K562 (cell line): ENCODE measurements at regions of chr20 and their contacts with region 1.

Region 1: DNA sequence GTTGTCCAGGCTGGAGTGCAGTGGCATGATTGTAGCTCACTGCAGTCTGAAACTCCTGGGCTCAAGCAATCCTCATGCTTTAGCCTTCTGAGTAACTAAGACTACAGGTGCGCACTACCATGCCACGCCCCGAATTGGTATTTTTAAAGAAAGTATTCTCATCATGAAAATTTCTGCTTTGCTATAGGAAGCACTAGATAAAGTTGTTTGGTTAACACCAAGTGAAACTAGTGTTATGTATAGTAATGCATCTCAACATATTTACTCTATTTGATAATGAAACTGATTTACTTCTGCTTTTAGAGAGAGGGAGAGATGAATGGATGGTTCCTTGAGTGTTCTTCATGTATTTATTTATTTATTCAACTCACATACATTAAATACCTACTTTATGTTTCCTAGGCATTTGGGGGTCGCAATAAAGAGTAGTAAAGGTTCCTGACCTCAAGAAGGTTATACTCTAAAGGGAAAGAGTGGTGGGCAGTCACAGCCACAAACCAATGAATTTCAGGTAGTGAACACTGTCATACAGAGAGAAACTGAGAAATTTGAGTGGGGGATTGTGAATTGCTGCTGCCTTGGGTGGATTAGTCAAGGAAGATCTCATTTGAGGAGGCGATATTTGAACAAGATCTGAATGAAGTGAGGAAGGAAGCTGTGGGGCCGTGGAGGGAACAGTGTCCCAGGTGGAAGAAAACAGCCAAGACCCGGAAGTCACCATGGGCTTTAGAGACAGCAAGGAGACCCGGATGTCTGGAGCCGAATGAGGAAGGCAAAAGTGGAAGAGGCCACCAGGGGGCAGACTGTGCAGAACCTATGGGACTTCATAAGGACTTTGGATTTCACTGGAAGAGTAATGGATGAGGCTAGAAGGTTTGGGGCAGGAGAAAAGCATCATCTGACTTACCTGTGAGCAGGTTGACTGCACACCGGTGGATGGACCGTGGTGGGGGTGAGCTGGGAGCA is 185.6 kb downstream of the TSHZ2 start:
- DNase-seq: peak; percentile 55 to 79 (median 59)
- ATAC-seq: peak; percentile 56
- H3K4me3 ChIP-seq: no peak overlapping the region
- H3K27ac ChIP-seq: no peak overlapping the region
- H3K4me1 ChIP-seq: peaks cover 14 to 20% of the 10 kb centered on the region in 2 experiments
- H3K27me3 ChIP-seq: no peaks in the 10 kb centered on the region
- CTCF ChIP-seq: peak; percentile 61 to 69 (median 66)
- EP300 ChIP-seq: no peak
- POLR2A ChIP-seq: no peak
- RAD21 ChIP-seq: peak in 1 of 2 experiments; percentile 68; a peak in 3 of 4 replicates

Region 2: DNA sequence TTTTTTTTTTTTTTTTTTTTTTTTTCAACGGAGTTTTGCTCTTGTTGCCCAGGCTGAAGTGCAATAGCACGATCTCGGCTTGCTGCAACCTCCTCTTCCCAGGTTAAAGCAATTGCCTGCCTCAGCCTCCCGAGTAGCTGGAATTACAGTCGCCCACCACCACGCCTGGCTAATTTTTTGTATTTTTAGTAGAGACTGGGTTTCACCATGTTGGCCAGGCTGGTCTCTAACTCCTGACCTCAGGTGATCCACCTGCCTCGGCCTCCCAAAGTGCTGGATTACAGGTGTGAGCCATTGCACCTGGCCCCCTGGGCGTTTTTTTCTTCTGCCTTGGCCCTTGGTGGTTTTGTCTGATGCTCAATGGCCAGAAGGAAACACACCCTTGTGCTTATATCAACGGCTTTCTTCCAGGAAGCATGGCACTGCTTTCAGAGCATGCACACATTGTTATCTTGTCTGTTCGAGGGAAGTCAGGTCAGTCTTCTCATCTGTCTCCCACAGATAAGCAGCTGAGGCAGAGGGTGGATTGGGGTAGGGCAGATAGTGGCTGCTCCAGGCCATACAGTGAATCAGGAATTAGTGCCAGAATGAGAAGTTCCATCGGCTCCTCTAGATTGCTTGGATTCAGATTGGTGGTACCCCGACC is 17.5 kb after region 1 on chr20:
- CTCF ChIA-PET with region 1: no interaction called
- POLR2A ChIA-PET with region 1: interaction called, 4 read pairs
- in situ Hi-C with region 1: no loop called
- intact Hi-C with region 1: loop called (anchors 1 kb)
- DNase-seq: peak; percentile 92 to 95 (median 94)
- ATAC-seq: peak; percentile 94
- H3K4me3 ChIP-seq: no peak overlapping the region
- H3K27ac ChIP-seq: peak overlapping the region; percentile 17; the same call in 2 of the 3 replicates
- H3K4me1 ChIP-seq: peaks cover 20 to 35% of the 10 kb centered on the region in 2 experiments; a peak in 4 of 5 replicates
- H3K27me3 ChIP-seq: no peaks in the 10 kb centered on the region
- CTCF ChIP-seq: no peak
- EP300 ChIP-seq: peak; percentile 99
- POLR2A ChIP-seq: no peak
- RAD21 ChIP-seq: peak in 1 of 2 experiments; percentile 50; a peak in 3 of 4 replicates

Region 3: GRCh38 chr20:53195876-53196610 is 38.3 kb after region 1 on chr20:
- CTCF ChIA-PET with region 1: no interaction called
- POLR2A ChIA-PET with region 1: no interaction called
- in situ Hi-C with region 1: no loop called
- intact Hi-C with region 1: loop called (anchors 2 kb)
- DNase-seq: peak in 2 of 4 experiments; percentile 44 to 49
- ATAC-seq: peak; percentile 38; the same call in 1 of the 3 replicates
- H3K4me3 ChIP-seq: no peak overlapping the region
- H3K27ac ChIP-seq: no peak overlapping the region
- H3K4me1 ChIP-seq: peaks cover 0 to 6% of the 10 kb centered on the region in 2 experiments; a peak in 1 of 5 replicates
- H3K27me3 ChIP-seq: peaks cover 13 to 19% of the 10 kb centered on the region in 2 experiments; a peak in 4 of 5 replicates
- CTCF ChIP-seq: peak; percentile 27 to 63 (median 29); a peak in 3 of 6 replicates
- EP300 ChIP-seq: no peak
- POLR2A ChIP-seq: no peak
- RAD21 ChIP-seq: peak in 1 of 2 experiments; percentile 52; a peak in 3 of 4 replicates

Region 4: DNA sequence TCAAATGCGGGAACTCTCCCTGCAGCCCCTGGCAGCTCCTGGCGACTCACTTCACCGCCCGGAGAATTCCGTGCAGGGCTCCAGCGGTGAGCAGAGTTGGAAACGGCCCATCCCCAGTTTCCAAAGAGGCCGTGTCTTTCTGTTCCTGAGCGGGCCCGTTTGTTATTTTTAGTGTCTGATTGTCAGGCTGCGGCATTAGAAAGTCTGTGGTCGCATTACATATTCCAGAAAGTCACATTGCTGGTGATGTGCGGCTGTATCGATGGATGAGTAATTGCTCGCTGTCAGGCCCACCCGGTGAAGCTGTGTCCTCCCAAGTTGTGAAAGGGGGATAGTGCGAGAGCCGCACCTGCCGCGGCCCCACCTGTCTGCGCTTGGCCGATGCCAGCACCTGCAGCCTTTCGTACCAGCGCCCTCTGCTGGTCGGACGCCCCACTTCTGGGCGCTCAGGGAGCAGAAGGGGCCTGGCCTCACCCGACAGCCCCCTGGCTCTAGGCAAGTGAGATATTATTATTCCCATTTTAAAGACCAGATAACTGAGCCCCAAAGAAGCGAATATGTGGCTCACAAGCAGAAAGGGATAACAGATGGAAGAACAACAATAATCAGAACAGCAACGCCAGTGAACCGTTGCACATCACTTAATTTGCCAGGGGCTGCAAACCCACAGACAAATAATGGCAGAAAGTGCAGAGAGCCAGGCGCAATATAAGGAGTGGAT is 59.3 kb after region 1 on chr20:
- CTCF ChIA-PET with region 1: no interaction called
- POLR2A ChIA-PET with region 1: no interaction called
- in situ Hi-C with region 1: no loop called
- intact Hi-C with region 1: loop called (anchors 1 kb)
- DNase-seq: peak; percentile 72 to 83 (median 78)
- ATAC-seq: peak; percentile 99
- H3K4me3 ChIP-seq: no peak overlapping the region
- H3K27ac ChIP-seq: no peak overlapping the region
- H3K4me1 ChIP-seq: peaks cover under 1 to 5% of the 10 kb centered on the region in 2 experiments; a peak in 4 of 5 replicates
- H3K27me3 ChIP-seq: peaks cover 0 to 2% of the 10 kb centered on the region in 2 experiments; a peak in 2 of 5 replicates
- CTCF ChIP-seq: peak; percentile 81 to 91 (median 88)
- EP300 ChIP-seq: no peak
- POLR2A ChIP-seq: no peak
- RAD21 ChIP-seq: peak; percentile 80 to 89

Region 5: GRCh38 chr20:53238121-53238660 is 80.5 kb after region 1 on chr20:
- CTCF ChIA-PET with region 1: no interaction called
- POLR2A ChIA-PET with region 1: no interaction called
- in situ Hi-C with region 1: no loop called
- intact Hi-C with region 1: no loop called
- DNase-seq: no peak
- ATAC-seq: no peak
- H3K4me3 ChIP-seq: no peak overlapping the region
- H3K27ac ChIP-seq: no peak overlapping the region
- H3K4me1 ChIP-seq: no peaks in the 10 kb centered on the region
- H3K27me3 ChIP-seq: peaks cover 0 to under 1% of the 10 kb centered on the region in 2 experiments; a peak in 1 of 5 replicates
- CTCF ChIP-seq: no peak
- EP300 ChIP-seq: no peak
- POLR2A ChIP-seq: no peak
- RAD21 ChIP-seq: no peak